SK-N-SH (cell line): ENCODE measurements at regions of chrX and their contacts with region 1.

Region 1: DNA sequence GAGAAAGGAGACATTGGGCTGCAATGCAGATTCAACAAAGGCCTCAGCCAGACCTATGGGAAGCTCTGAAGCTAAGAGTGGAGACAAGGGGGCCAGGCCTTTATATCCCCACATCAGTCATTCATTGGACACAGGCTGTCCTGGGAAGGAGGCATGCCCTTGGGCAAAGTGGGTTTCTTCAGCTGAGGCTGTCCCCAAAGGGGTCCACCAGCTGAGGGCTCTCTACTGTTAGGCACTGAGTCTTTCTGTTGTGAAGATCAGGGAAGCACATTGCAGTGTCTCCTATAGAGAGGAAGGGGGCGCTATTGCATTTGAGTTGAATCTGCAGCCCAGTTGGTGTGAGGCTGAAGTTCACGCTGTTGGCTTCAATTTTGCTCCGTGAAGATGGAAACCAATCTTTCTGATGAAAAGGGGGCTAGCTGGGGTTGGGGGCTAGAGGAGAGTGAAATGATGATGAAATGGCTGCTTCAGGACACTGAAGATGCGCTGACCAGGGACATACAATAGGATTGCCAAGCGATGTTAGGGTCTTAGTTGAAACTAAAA is 48.0 kb downstream of the SLC25A5 start:
- DNase-seq: peak; percentile 75
- H3K4me3 ChIP-seq: no peak overlapping the region
- H3K27ac ChIP-seq: no peak overlapping the region
- H3K4me1 ChIP-seq: no peaks in the 10 kb centered on the region
- H3K27me3 ChIP-seq: peaks cover 11% of the 10 kb centered on the region; the same call in 1 of the 2 replicates
- CTCF ChIP-seq: peak; percentile 90
- EP300 ChIP-seq: no peak
- RAD21 ChIP-seq: peak; percentile 92

Region 2: GRCh38 chrX:119105826-119106225 is 410.4 kb before region 1 on chrX:
- CTCF ChIA-PET with region 1: no interaction called
- POLR2A ChIA-PET with region 1: no interaction called
- DNase-seq: no peak
- H3K4me3 ChIP-seq: no peak overlapping the region
- H3K27ac ChIP-seq: no peak overlapping the region
- H3K4me1 ChIP-seq: no peaks in the 10 kb centered on the region
- H3K27me3 ChIP-seq: peaks cover 25% of the 10 kb centered on the region; the same call in 1 of the 2 replicates
- CTCF ChIP-seq: no peak
- EP300 ChIP-seq: no peak
- RAD21 ChIP-seq: no peak

Region 3: DNA sequence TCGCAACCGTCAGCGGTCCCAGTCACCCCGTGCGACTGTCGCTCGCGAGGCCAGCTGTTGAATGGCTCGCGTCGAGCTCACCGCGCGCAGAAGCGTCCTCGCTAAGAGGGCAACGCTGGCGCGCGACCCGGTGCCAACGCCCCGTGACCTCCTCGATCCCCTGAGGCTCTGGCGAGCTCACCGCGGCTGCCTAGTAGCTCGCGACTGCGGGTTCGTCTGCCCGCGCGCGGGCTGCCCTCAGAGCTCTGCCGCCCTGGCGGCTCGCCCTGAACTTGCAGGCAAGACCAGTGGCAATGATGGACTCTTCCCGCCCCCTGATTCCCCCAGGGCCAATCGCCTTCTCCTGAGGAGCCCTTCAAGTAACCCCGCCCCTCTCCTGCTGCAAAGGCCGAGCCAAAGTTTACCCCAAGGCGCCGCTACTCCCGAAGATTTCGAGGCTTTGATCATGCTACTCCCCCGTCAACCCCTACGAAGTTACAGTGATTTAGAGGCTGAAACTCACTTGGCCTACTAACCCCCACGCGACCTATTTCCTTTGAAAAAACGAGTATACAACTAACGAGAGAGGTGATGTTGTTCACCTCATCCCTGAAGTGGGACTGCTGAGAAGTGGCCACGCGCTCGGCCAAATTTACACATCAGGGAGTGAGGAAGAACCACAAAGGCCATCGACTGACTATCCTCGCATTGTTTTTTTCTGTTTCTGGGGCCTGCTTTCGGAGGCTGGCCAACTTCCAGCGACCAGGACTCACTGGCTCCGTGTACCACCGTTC is 242.6 kb before region 1 on chrX:
- CTCF ChIA-PET with region 1: no interaction called
- POLR2A ChIA-PET with region 1: no interaction called
- DNase-seq: peak; percentile 27
- H3K4me3 ChIP-seq: no peak overlapping the region; a peak in 1 of 4 replicates
- H3K27ac ChIP-seq: no peak overlapping the region
- H3K4me1 ChIP-seq: no peaks in the 10 kb centered on the region
- H3K27me3 ChIP-seq: peaks cover 31% of the 10 kb centered on the region; the same call in 1 of the 2 replicates
- CTCF ChIP-seq: peak; percentile 14; the same call in 1 of the 2 replicates
- EP300 ChIP-seq: no peak
- RAD21 ChIP-seq: no peak

Region 4: DNA sequence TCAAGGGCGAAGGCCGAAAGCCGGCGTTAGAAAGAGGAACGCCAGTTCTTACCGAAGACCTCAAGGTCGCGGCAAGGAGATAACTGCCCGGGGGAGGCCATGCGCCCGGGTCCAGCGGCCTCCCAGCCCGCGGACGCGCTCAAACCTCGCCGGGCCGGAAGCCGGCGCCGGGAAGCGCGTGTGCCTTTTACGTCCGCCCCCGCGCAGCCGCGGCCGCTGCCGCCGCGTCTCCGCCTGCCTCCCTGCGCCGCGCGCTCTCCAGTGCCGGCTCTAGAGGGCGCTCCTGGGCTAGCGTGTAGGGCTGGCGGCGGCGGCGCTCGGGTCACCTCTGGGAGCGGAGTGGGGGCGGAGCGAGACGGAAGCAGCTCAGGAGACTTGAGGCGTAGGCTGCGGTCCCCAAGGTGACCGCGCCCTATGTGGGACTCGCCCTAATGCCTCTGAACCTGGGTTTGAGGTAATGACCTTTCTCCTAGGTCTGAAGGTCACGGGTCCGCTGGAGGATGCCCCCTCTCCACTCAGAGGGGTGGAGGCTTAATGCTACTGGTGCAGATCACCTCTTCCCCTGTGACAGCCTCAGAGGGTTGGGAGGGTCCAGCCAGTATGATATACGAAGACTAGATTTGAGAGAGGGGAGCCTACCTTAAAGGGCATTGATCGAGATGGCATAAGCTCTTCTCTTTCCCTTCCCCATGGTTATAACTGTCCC is 47.1 kb before region 1 on chrX:
- CTCF ChIA-PET with region 1: interaction called, 25 read pairs
- POLR2A ChIA-PET with region 1: interaction called, 8 read pairs
- DNase-seq: peak; percentile 84
- H3K4me3 ChIP-seq: peak overlapping the region; percentile 72 to 88
- H3K27ac ChIP-seq: peak overlapping the region; percentile 72 to 83
- H3K4me1 ChIP-seq: peaks cover 5 to 10% of the 10 kb centered on the region in 2 experiments; a peak in 1 of 4 replicates
- H3K27me3 ChIP-seq: peaks cover 7% of the 10 kb centered on the region; the same call in 1 of the 2 replicates
- CTCF ChIP-seq: peak; percentile 56
- EP300 ChIP-seq: no peak
- RAD21 ChIP-seq: peak; percentile 57

Region 5: DNA sequence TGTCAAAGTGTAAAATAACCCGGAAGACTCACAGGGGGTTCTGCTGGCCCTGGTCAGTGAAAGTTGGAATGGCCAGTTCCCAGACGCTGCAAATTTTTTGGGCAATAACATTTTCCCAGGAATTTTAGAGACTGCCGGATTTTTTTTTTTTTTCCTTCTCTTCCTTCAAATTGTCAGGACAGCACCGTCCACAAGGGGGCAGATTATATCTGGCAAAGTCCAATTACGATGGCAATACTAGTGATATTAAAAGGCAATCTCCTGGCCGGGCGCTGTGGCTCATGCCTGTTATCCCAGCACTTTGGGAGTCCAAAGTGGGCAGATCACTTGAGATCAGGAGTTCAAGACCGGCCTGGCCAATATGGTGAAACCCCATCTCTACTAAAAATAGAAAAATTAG is 27.5 kb before region 1 on chrX:
- CTCF ChIA-PET with region 1: interaction called, 53 read pairs
- POLR2A ChIA-PET with region 1: interaction called, 4 read pairs
- DNase-seq: peak; percentile 71
- H3K4me3 ChIP-seq: no peak overlapping the region
- H3K27ac ChIP-seq: no peak overlapping the region
- H3K4me1 ChIP-seq: no peaks in the 10 kb centered on the region
- H3K27me3 ChIP-seq: peaks cover 5% of the 10 kb centered on the region; the same call in 1 of the 2 replicates
- CTCF ChIP-seq: peak; percentile 81
- EP300 ChIP-seq: no peak
- RAD21 ChIP-seq: peak; percentile 64

Region 6: GRCh38 chrX:119501510-119502163 is 14.6 kb before region 1 on chrX:
- CTCF ChIA-PET with region 1: interaction called, 25 read pairs
- POLR2A ChIA-PET with region 1: no interaction called
- DNase-seq: no peak
- H3K4me3 ChIP-seq: no peak overlapping the region
- H3K27ac ChIP-seq: peak overlapping the region in 1 of 2 experiments; percentile 77; a peak in 2 of 4 replicates
- H3K4me1 ChIP-seq: peaks cover 0 to 4% of the 10 kb centered on the region in 2 experiments; a peak in 1 of 4 replicates
- H3K27me3 ChIP-seq: 0 out of 2 replicates have a peak, but pooled peaks cover 9% of the 10 kb centered on the region
- CTCF ChIP-seq: no peak
- EP300 ChIP-seq: no peak
- RAD21 ChIP-seq: no peak

Region 7: DNA sequence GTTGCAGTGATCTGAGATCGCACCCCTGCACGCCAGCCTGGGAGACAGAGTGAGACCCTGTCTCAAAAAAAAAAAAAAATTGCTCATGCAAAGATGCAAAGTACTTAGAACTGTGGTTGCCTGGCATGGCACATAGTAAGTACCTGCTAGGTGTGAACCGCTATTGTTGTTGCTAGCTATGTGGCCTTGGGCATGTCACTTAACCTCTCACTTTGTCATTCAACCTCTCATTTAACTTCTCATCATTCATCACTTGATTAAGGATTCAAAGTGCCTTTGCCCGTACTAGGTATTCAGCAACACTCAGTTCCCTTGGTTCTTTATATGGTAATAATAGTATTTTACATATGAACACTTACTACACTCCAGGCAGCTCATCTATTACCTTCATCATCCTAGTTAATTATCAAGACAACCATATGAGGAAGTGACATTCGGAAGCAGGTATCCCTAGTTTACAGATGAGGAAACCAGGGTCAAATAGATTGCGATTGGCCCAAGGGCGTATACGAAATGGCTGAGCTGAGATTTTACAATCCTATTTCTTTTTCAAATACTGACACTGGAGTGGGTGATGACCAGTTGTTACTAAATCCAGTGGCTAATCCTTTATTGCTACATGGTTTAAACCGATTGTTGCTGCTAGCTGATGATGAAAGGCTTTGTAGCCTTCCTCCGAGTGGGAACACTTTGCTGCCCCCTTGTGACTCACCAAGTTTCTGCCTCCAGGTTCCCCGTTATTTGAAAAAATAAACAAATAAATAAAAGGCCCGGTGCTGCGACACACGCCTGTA is 213.4 kb after region 1 on chrX:
- CTCF ChIA-PET with region 1: interaction called, 31 read pairs
- POLR2A ChIA-PET with region 1: no interaction called
- DNase-seq: peak; percentile 66
- H3K4me3 ChIP-seq: no peak overlapping the region
- H3K27ac ChIP-seq: no peak overlapping the region
- H3K4me1 ChIP-seq: peaks cover under 1% of the 10 kb centered on the region in 2 experiments; a peak in 1 of 4 replicates
- H3K27me3 ChIP-seq: peaks cover 42% of the 10 kb centered on the region; the same call in 1 of the 2 replicates
- CTCF ChIP-seq: peak; percentile 77
- EP300 ChIP-seq: no peak
- RAD21 ChIP-seq: peak; percentile 80